BJ (cell line): ENCODE measurements at regions of chr10 and their contacts with region 1.

Region 1: GRCh38 chr10:27241652-27242472 is 1.3 kb upstream of the ACBD5 start:
- DNase-seq: peak; percentile 73
- H3K4me3 ChIP-seq: peak overlapping the region; percentile 74
- H3K27me3 ChIP-seq: no peaks in the 10 kb centered on the region
- CTCF ChIP-seq: peak; percentile 48

Region 2: GRCh38 chr10:27134371-27134770 is 107.5 kb before region 1 on chr10:
- CTCF ChIA-PET with region 1: no interaction called
- POLR2A ChIA-PET with region 1: no interaction called
- DNase-seq: no peak
- H3K4me3 ChIP-seq: no peak overlapping the region
- H3K27me3 ChIP-seq: no peaks in the 10 kb centered on the region
- CTCF ChIP-seq: no peak

Region 3: GRCh38 chr10:27223964-27224363 is 17.9 kb before region 1 on chr10:
- CTCF ChIA-PET with region 1: interaction called, 10 read pairs
- POLR2A ChIA-PET with region 1: no interaction called
- DNase-seq: no peak
- H3K4me3 ChIP-seq: no peak overlapping the region
- H3K27me3 ChIP-seq: no peaks in the 10 kb centered on the region
- CTCF ChIP-seq: peak; percentile 63

Region 4: DNA sequence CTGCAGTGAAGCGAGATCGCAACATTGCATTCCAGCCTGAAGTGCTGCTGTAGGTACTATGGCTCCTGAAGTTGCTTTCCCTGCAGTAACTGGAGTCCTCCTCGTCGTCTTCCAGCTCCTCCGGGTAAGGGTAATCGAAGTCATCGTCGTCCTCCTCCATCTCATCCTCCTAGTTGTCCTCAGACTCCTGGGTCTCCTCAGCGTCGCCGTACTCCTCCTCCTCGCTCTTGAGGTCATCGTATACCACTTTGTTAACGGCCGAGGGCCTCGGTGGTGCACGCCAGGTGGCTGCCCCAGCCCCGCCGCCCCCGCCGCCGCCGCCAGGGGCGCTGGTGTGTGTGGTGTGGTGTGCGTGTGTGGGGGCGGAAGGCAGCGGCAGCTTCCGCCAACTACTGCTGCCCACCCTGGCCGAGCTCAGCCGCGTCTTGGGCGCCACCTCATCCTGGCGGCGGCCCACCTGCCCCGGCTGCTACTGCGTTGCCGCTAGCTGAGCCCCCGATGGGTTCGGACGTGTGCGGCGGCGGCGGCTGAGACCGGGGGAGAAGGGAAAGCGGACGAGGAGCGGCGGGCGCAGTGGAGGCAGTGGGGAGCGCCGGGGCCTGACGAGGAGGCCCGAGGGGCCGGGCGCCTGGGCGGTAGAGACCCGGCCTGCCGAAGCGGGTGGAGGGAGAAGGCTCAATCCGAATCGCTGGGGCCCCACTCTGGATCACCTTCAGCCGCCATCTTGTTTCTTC is 10.6 kb after region 1 on chr10:
- CTCF ChIA-PET with region 1: interaction called, 12 read pairs
- POLR2A ChIA-PET with region 1: no interaction called
- DNase-seq: no peak
- H3K4me3 ChIP-seq: peak overlapping the region; percentile 50
- H3K27me3 ChIP-seq: no peaks in the 10 kb centered on the region
- CTCF ChIP-seq: peak; percentile 41

Region 5: GRCh38 chr10:27542812-27543211 is 300.9 kb after region 1 on chr10:
- CTCF ChIA-PET with region 1: no interaction called
- POLR2A ChIA-PET with region 1: no interaction called
- DNase-seq: peak; percentile 5
- H3K4me3 ChIP-seq: no peak overlapping the region
- H3K27me3 ChIP-seq: no peaks in the 10 kb centered on the region
- CTCF ChIP-seq: no peak

Region 6: GRCh38 chr10:27568196-27569175 is 326.6 kb after region 1 on chr10:
- CTCF ChIA-PET with region 1: no interaction called
- POLR2A ChIA-PET with region 1: interaction called, 13 read pairs
- DNase-seq: no peak
- H3K4me3 ChIP-seq: no peak overlapping the region
- H3K27me3 ChIP-seq: no peaks in the 10 kb centered on the region
- CTCF ChIP-seq: no peak